IMR-90 (cell line): ENCODE measurements at regions of chr16 and their contacts with region 1.

Region 1: GRCh38 chr16:55701442-55702319 is 45.9 kb downstream of the SLC6A2 start:
- DNase-seq: peak; percentile 26
- ATAC-seq: peak; percentile 72
- H3K4me3 ChIP-seq: no peak overlapping the region
- H3K27ac ChIP-seq: no peak overlapping the region
- H3K4me1 ChIP-seq: no peaks in the 10 kb centered on the region
- H3K27me3 ChIP-seq: peaks cover 30% of the 10 kb centered on the region
- CTCF ChIP-seq: peak; percentile 48
- POLR2A ChIP-seq: no peak
- RAD21 ChIP-seq: peak; percentile 44

Region 2: DNA sequence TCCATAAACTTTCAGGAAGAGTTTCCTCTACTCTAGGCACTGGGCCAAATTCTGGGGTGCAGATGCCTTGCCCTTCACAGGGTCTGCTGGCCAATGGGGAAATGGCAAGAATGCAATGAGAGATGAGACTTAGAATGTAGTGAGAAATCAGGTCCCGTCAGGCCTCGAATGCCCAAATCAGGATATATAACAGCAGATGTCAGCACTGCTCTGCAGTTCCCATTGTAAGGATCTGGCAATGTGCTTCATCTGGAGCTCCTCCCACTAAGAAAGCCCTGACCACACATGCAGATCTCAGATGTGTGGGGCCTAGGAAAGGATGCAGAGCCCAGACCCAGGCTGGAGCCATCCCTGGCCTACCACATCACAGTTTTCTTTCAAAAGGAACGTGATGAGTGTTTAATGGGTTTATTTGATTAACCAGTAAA is 206.7 kb before region 1 on chr16:
- CTCF ChIA-PET with region 1: no interaction called
- POLR2A ChIA-PET with region 1: no interaction called
- dilution Hi-C with region 1: no loop called
- in situ Hi-C with region 1: no loop called
- intact Hi-C with region 1: loop called (anchors 1 kb)
- DNase-seq: peak; percentile 96
- ATAC-seq: peak; percentile 74
- H3K4me3 ChIP-seq: no peak overlapping the region
- H3K27ac ChIP-seq: no peak overlapping the region
- H3K4me1 ChIP-seq: peaks cover 13% of the 10 kb centered on the region
- H3K27me3 ChIP-seq: no peaks in the 10 kb centered on the region
- CTCF ChIP-seq: peak; percentile 63
- POLR2A ChIP-seq: no peak
- RAD21 ChIP-seq: peak; percentile 85